ENCODE measurements at regions of chr5 and their contacts with region 1.

Region 1: GRCh38 chr5:107673368-107674136 is 2.8 kb upstream of the EFNA5 start:
- DNase-seq: no peak
- ATAC-seq: peak; percentile 64
- H3K4me3 ChIP-seq: peak overlapping the region; percentile 83 to 86
- H3K27ac ChIP-seq: peak overlapping the region; percentile 92
- H3K4me1 ChIP-seq: peaks cover 2% of the 10 kb centered on the region
- H3K27me3 ChIP-seq: no peaks in the 10 kb centered on the region; the same call in 1 of the 2 replicates
- CTCF ChIP-seq: peak; percentile 97

Region 2: DNA sequence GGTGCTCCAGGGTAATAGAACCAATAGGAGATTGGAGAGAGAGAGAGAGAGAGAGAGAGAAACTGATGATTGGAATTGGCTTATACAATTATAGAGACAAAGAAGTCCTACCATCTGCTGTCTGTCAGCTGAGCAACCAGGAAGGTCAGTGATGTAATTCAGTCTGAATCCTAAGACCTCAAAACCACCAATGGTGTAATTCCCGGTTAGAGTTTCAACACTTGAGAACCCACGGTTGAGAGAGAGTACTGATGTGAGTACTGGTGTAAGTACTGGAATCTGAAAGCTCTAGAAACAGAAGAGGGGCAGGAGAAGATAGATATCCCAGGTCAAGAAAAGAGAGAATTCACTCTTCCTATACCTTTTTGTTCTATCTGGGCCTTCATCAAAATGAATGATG is 778.6 kb before region 1 on chr5:
- CTCF ChIA-PET with region 1: no interaction called
- POLR2A ChIA-PET with region 1: interaction called, 10 read pairs
- in situ Hi-C with region 1: no loop called
- intact Hi-C with region 1: no loop called
- DNase-seq: no peak
- ATAC-seq: no peak
- H3K4me3 ChIP-seq: no peak overlapping the region
- H3K27ac ChIP-seq: no peak overlapping the region
- H3K4me1 ChIP-seq: no peaks in the 10 kb centered on the region
- H3K27me3 ChIP-seq: no peaks in the 10 kb centered on the region
- CTCF ChIP-seq: no peak

Region 3: DNA sequence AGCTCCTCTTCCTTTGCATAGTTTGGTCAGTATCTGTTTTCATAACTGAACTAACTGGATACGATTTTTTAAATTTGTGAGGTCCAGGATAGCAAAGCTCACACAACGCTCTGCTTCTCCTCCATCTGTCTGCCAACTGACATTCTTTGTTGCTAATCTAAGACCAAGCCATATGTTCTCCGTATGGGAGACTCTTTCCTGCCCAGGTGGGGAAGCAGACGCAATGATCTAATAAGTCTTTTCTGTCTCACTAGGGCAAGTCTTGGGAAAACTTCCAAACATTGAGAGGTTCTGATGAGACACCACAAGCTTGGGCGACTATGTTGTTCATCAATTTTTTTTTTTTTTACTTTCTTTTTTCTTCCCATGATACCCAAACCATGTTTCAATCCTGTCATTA is 561.3 kb before region 1 on chr5:
- CTCF ChIA-PET with region 1: no interaction called
- POLR2A ChIA-PET with region 1: no interaction called
- in situ Hi-C with region 1: no loop called
- intact Hi-C with region 1: loop called (anchors 10 kb)
- DNase-seq: no peak
- ATAC-seq: no peak
- H3K4me3 ChIP-seq: no peak overlapping the region
- H3K27ac ChIP-seq: no peak overlapping the region
- H3K4me1 ChIP-seq: no peaks in the 10 kb centered on the region
- H3K27me3 ChIP-seq: no peaks in the 10 kb centered on the region
- CTCF ChIP-seq: no peak

Region 4: GRCh38 chr5:107571621-107572536 is 101.7 kb before region 1 on chr5:
- CTCF ChIA-PET with region 1: interaction called, 7 read pairs
- POLR2A ChIA-PET with region 1: no interaction called
- in situ Hi-C with region 1: no loop called
- intact Hi-C with region 1: loop called (anchors 5 kb)
- DNase-seq: peak; percentile 90
- ATAC-seq: peak; percentile 95
- H3K4me3 ChIP-seq: peak overlapping the region; percentile 49 to 74
- H3K27ac ChIP-seq: peak overlapping the region; percentile 95
- H3K4me1 ChIP-seq: peaks cover 49% of the 10 kb centered on the region
- H3K27me3 ChIP-seq: no peaks in the 10 kb centered on the region
- CTCF ChIP-seq: peak; percentile 91

Region 5: DNA sequence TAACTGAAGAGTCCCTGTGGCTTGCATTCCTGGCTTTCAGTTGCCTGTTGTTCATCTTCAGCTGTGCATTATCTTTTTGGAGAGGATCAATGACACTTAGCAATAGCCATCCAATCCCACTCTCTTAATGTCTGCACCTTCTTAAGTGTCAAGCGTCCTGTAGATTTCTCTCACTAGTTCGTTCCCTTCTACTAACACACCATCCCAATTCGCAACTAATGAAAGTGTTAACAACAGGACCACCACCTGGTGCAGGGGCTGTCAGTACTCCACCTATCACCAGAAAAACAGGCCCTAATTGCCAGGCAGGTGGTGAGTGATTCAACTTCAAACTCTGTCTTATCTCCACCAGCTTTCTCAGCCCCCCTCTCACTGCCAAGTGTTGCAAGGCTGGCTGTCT is 166.6 kb after region 1 on chr5:
- CTCF ChIA-PET with region 1: no interaction called
- POLR2A ChIA-PET with region 1: no interaction called
- in situ Hi-C with region 1: no loop called
- intact Hi-C with region 1: no loop called
- DNase-seq: no peak
- ATAC-seq: no peak
- H3K4me3 ChIP-seq: no peak overlapping the region
- H3K27ac ChIP-seq: no peak overlapping the region
- H3K4me1 ChIP-seq: no peaks in the 10 kb centered on the region
- H3K27me3 ChIP-seq: peaks cover 11% of the 10 kb centered on the region
- CTCF ChIP-seq: no peak

Measured in Panc1 (cell line).